Tibial artery (tissue), 4 donors: ENCODE measurements at regions of chr21 and their contacts with region 1.

Region 1: GRCh38 chr21:38897532-38898422 is 92.0 kb downstream of the ETS2 start:
- DNase-seq: no peak
- H3K4me3 ChIP-seq: no peak overlapping the region
- H3K27ac ChIP-seq: no peak overlapping the region
- H3K4me1 ChIP-seq: peaks cover 0 to 11% (median 0%) of the 10 kb centered on the region in 4 donors
- H3K27me3 ChIP-seq: no peaks in the 10 kb centered on the region
- CTCF ChIP-seq: no peak

Region 2: GRCh38 chr21:38755681-38756371 is 142.0 kb before region 1 on chr21:
- intact Hi-C with region 1: no loop called
- DNase-seq: peak; percentile 82 to 88
- H3K4me3 ChIP-seq: no peak overlapping the region
- H3K27ac ChIP-seq: peak overlapping the region; percentile 71 to 80
- H3K4me1 ChIP-seq: peaks cover 0 to 90% (median 66%) of the 10 kb centered on the region in 4 donors
- H3K27me3 ChIP-seq: no peaks in the 10 kb centered on the region
- CTCF ChIP-seq: no peak

Region 3: GRCh38 chr21:38805328-38806152 is 92.2 kb before region 1 on chr21 and contains the start of gene ETS2:
- intact Hi-C with region 1: no loop called
- DNase-seq: peak; percentile 90 to 96
- H3K4me3 ChIP-seq: peak within 1 kb of the TSS; percentile 75 to 86
- H3K27ac ChIP-seq: peak within 1 kb of the TSS; percentile 83 to 93
- H3K4me1 ChIP-seq: peaks cover 0 to 35% (median 15%) of the 10 kb centered on the region in 4 donors
- H3K27me3 ChIP-seq: no peaks in the 10 kb centered on the region
- CTCF ChIP-seq: no peak

Region 4: DNA sequence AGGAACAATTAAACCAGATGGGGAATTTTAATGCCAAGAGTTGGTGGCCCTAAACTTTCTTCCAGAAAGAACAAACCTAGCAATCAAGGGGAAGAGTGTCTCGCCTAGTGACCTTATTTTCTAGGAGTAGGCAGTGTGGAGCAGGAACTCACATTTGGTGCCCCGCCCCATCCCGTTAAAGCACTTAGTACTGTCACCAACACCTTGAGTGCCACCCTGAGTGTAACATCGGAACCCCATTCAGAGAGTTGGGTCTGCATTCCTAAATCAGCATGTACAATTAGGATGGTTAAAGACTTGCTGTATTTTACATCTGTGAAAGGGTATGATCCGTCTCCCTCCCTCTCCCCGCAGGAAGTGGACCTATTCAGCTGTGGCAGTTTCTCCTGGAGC is 76.5 kb before region 1 on chr21:
- intact Hi-C with region 1: no loop called
- DNase-seq: no peak
- H3K4me3 ChIP-seq: no peak overlapping the region
- H3K27ac ChIP-seq: peak overlapping the region; percentile 82 to 86
- H3K4me1 ChIP-seq: peaks cover 0 to 76% (median 42%) of the 10 kb centered on the region in 4 donors
- H3K27me3 ChIP-seq: no peaks in the 10 kb centered on the region
- CTCF ChIP-seq: no peak

Region 5: GRCh38 chr21:38831526-38832467 is 66.0 kb before region 1 on chr21:
- intact Hi-C with region 1: loop called (anchors 10 kb)
- DNase-seq: peak; percentile 91 to 93
- H3K4me3 ChIP-seq: no peak overlapping the region
- H3K27ac ChIP-seq: peak overlapping the region; percentile 18 to 57
- H3K4me1 ChIP-seq: peaks cover 0 to 14% (median 11%) of the 10 kb centered on the region in 4 donors
- H3K27me3 ChIP-seq: no peaks in the 10 kb centered on the region
- CTCF ChIP-seq: no peak